B cell (primary cell): ENCODE measurements at regions of chr10 and their contacts with region 1.

Region 1: DNA sequence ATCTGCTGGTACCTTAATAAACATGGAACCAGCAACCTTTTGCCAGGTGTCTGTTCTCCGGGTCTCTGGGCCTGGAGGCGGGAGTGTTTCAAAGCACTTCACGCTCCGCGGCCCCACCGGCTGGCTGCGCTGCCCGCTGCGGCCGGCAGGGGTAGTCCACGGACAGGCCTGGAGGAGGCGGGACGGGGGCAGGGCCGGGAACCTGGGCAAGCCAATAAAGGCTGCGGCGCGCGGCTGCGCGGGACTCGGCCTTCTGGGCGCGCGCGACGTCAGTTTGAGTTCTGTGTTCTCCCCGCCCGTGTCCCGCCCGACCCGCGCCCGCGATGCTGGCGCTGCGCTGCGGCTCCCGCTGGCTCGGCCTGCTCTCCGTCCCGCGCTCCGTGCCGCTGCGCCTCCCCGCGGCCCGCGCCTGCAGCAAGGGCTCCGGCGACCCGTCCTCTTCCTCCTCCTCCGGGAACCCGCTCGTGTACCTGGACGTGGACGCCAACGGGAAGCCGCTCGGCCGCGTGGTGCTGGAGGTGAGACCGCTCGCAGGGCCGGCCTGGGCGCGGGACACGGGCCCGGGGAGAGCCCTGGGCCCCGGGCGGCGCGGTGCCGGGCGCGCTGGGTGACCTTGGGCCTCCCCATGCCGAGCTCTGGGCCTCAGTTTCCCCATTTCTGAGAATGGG is at the start of gene PPIF:
- DNase-seq: peak; percentile 95
- ATAC-seq: peak; percentile 97
- H3K4me3 ChIP-seq: peak within 1 kb of the TSS; percentile 9 to 89 (median 69)
- H3K4me3 Mint-ChIP-seq: peak within 1 kb of the TSS; percentile 88
- H3K27ac ChIP-seq: peak within 1 kb of the TSS; percentile 84 to 92
- H3K27ac Mint-ChIP-seq: peak within 1 kb of the TSS; percentile 93
- H3K4me1 ChIP-seq: peaks cover 14 to 26% of the 10 kb centered on the region in 2 donors
- H3K4me1 Mint-ChIP-seq: peaks cover 27% of the 10 kb centered on the region
- H3K27me3 ChIP-seq: no peaks in the 10 kb centered on the region
- H3K27me3 Mint-ChIP-seq: no peaks in the 10 kb centered on the region
- CTCF ChIP-seq: peak; percentile 90
- total RNA-seq, gene PPIF: 50.4 and 50.7 TPM in 2 replicates

Region 2: DNA sequence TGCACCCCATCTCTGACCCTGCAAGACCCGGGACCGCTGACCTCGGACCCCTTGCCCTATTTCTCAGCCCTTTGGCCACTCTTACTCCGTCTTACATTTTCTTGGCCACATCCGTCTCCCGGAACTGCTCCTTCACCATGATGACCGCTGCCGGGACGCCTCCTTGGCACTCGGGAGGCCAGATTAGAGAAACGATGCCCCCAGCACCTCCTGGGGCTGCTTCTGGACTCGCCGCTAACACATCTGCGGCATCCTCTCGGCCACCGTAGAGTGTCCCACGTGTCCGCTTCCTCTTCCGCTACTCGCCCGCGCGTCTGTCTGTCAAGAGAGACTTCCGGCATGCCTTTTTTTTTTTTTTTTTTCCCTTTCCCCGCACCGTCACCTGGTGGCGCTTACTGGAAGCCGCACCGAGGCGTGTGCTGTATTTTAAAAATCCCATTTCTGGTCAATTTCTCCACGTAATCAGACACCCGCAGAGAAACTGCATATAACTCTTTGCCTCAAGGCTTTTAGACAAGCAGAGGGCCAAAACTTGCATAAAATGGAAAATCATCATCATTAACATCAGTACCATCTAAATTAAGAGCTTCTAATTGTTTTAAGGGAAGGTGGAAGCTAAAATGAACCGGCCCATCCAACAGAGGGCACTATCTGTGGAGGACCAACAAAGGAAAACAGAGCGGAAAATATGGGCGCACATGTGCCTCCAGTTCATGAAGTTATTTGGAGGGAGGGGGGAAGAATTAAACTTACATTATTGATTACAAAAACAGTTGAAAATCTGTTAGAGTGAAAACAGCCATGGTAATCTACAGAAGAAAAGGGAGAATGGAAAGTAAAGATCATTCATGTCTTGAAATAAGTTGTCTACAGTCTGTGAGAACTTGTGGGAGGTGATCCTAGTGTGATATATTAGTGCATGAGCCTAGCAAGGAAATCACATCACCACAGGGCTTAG is 1317.8 kb before region 1 on chr10 and contains the start of gene POLR3A:
- CTCF ChIA-PET with region 1: no interaction called
- POLR2A ChIA-PET with region 1: no interaction called
- intact Hi-C with region 1: loop called (anchors 1 kb)
- DNase-seq: peak; percentile 96
- ATAC-seq: peak; percentile 60
- H3K4me3 ChIP-seq: peak within 1 kb of the TSS; percentile 78 to 100 (median 96)
- H3K4me3 Mint-ChIP-seq: peak within 1 kb of the TSS; percentile 99
- H3K27ac ChIP-seq: peak within 1 kb of the TSS; percentile 43 to 81
- H3K27ac Mint-ChIP-seq: peak within 1 kb of the TSS; percentile 89
- H3K4me1 ChIP-seq: peaks cover 18 to 28% of the 10 kb centered on the region in 2 donors
- H3K4me1 Mint-ChIP-seq: peaks cover 37% of the 10 kb centered on the region
- H3K27me3 ChIP-seq: no peaks in the 10 kb centered on the region
- H3K27me3 Mint-ChIP-seq: no peaks in the 10 kb centered on the region
- CTCF ChIP-seq: peak; percentile 64
- total RNA-seq, gene POLR3A: 18.3 and 18.4 TPM in 2 replicates

Region 3: GRCh38 chr10:79316671-79317431 is 30.5 kb before region 1 on chr10:
- CTCF ChIA-PET with region 1: interaction called, 15 read pairs
- POLR2A ChIA-PET with region 1: interaction called, 6 read pairs
- intact Hi-C with region 1: loop called (anchors 1 kb)
- DNase-seq: peak; percentile 33
- ATAC-seq: peak; percentile 78
- H3K4me3 ChIP-seq: no peak overlapping the region
- H3K4me3 Mint-ChIP-seq: peak overlapping the region; percentile 73
- H3K27ac ChIP-seq: no peak overlapping the region
- H3K27ac Mint-ChIP-seq: peak overlapping the region; percentile 51
- H3K4me1 ChIP-seq: peaks cover 17 to 21% of the 10 kb centered on the region in 2 donors
- H3K4me1 Mint-ChIP-seq: peaks cover 33% of the 10 kb centered on the region
- H3K27me3 ChIP-seq: no peaks in the 10 kb centered on the region
- H3K27me3 Mint-ChIP-seq: no peaks in the 10 kb centered on the region
- CTCF ChIP-seq: no peak

Region 4: DNA sequence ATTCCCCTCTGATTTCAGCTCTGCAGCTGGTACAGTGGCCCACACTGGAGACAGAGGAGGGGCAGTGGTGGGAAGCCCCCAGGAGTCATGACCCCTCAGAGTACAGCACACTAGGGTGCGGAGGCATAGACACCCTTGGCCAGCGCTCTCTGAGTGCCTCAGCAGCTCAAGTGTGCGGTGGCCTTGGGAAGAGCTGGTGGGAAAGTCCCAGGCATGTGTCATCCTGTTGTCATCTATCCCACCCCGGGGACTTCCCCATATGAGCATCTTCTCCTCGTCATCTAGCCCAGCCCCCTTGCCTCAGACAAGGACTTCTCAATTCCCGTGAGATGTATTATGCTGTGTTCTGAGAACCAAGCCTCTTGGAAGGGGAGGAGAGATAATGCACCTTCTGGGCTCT is 15.7 kb before region 1 on chr10:
- CTCF ChIA-PET with region 1: interaction called, 4 read pairs
- POLR2A ChIA-PET with region 1: interaction called, 4 read pairs
- intact Hi-C with region 1: loop called (anchors 1 kb)
- DNase-seq: peak; percentile 87
- ATAC-seq: peak; percentile 93
- H3K4me3 ChIP-seq: no peak overlapping the region
- H3K4me3 Mint-ChIP-seq: peak overlapping the region; percentile 57
- H3K27ac ChIP-seq: no peak overlapping the region
- H3K27ac Mint-ChIP-seq: peak overlapping the region; percentile 71
- H3K4me1 ChIP-seq: peaks cover 8 to 13% of the 10 kb centered on the region in 2 donors
- H3K4me1 Mint-ChIP-seq: peaks cover 20% of the 10 kb centered on the region
- H3K27me3 ChIP-seq: no peaks in the 10 kb centered on the region
- H3K27me3 Mint-ChIP-seq: no peaks in the 10 kb centered on the region
- CTCF ChIP-seq: no peak

Region 5: GRCh38 chr10:79445141-79445976 is 98.0 kb after region 1 on chr10 and contains the start of gene ZCCHC24:
- CTCF ChIA-PET with region 1: no interaction called
- POLR2A ChIA-PET with region 1: interaction called, 9 read pairs
- intact Hi-C with region 1: loop called (anchors 1 kb)
- DNase-seq: peak; percentile 97
- ATAC-seq: peak; percentile 91
- H3K4me3 ChIP-seq: peak within 1 kb of the TSS; percentile 44 to 73 (median 65)
- H3K4me3 Mint-ChIP-seq: peak within 1 kb of the TSS; percentile 94
- H3K27ac ChIP-seq: no peak within 1 kb of the TSS
- H3K27ac Mint-ChIP-seq: peak within 1 kb of the TSS; percentile 86
- H3K4me1 ChIP-seq: peaks cover 18 to 29% of the 10 kb centered on the region in 2 donors
- H3K4me1 Mint-ChIP-seq: peaks cover 26% of the 10 kb centered on the region
- H3K27me3 ChIP-seq: peaks cover 0 to 12% (median 5%) of the 10 kb centered on the region in 4 experiments
- H3K27me3 Mint-ChIP-seq: no peaks in the 10 kb centered on the region
- CTCF ChIP-seq: no peak
- total RNA-seq, gene ZCCHC24: 2.1 and 2.3 TPM in 2 replicates